H1 (cell line): ENCODE measurements at regions of chr10 and their contacts with region 1.

Region 1: DNA sequence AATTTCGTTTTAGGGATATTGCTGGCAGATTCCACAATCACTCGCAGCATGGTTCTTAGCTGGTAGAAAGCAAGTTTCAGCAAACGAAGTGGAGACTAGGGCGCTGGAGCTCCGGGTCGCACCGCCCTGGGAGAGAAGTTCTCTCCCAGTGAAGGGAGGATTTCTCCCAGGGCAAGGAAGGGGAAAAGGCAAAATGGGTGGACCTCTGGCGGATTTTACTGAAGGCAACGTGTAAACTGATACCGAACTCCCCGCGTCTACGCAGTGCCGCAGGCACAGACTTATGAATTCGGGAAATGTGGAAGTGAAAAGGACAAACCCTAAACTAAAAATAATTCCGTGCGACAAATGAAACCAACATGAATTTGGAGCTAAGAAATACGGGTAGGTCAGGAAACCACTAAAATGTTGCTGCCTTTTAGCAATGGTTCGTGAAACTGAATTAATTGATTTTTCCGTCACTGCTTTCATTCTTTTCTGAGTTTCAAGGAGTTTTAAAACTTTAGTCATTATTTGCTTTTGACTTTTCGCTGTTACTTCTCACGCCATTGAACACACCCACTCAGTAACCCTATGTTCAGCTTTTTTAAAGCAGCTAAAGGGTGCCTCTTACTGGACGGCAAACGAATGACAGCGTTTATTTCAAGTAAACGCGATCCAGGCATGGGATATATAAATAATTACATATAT is at the start of gene MYOF:
- DNase-seq: peak in 1 of 2 experiments; percentile 59
- H3K4me3 ChIP-seq: peak within 1 kb of the TSS; percentile 66 to 82 (median 73); a peak in 7 of 8 replicates
- H3K27ac ChIP-seq: no peak within 1 kb of the TSS
- H3K4me1 ChIP-seq: peaks cover 0 to 2% (median 0%) of the 10 kb centered on the region in 4 experiments; a peak in 1 of 7 replicates
- H3K27me3 ChIP-seq: peaks cover 0 to 5% (median 0%) of the 10 kb centered on the region in 4 experiments; a peak in 4 of 7 replicates
- CTCF ChIP-seq: peak in 2 of 3 experiments; percentile 52 to 71; a peak in 3 of 4 replicates
- EP300 ChIP-seq: no peak
- POLR2A ChIP-seq: no peak
- RAD21 ChIP-seq: peak; percentile 90
- total RNA-seq, gene MYOF: 2.3 and 3.2 TPM in 2 replicates

Region 2: DNA sequence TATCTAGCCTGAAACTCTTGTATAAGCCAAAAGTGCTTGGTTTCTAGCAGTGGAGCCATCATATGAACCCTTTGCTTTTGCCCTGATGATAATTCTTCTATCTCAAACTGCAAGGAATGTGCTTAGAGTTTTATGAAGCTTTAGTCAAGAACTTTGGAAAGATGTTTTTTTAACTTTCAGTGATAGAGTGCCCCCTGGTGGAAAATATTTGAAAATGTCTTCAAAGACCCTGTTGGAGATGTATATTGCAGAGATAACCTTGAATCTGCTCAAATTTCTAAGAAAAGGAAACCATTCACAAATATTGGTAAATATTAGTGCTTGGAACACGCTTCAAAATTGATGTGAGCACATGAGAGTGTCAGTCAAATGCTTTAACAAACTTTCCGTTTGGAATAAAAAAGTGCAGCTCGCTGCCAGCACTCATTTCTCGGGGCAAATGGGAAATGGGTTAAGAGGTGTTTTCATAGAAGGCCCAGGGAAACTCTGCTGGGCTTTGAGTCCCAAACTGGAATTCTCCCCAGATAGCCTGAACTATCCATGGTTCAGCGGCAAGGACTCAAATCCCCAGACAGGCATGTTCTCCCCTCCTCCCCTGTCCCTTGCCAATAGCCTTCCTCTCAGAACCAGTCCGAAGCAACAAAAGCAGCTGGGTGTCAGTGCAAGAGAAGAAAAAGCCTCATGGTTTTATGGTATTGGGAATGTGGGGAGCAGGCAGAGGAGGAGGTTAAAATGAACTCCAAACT is 129.5 kb before region 1 on chr10:
- CTCF ChIA-PET with region 1: interaction called, 41 read pairs
- POLR2A ChIA-PET with region 1: no interaction called
- DNase-seq: no peak
- H3K4me3 ChIP-seq: no peak overlapping the region
- H3K27ac ChIP-seq: no peak overlapping the region
- H3K4me1 ChIP-seq: peaks cover 0 to 5% (median 2%) of the 10 kb centered on the region in 4 experiments; a peak in 3 of 7 replicates
- H3K27me3 ChIP-seq: peaks cover 0 to 3% (median 0%) of the 10 kb centered on the region in 4 experiments; a peak in 1 of 7 replicates
- CTCF ChIP-seq: peak in 2 of 3 experiments; percentile 40 to 44; a peak in 2 of 4 replicates
- EP300 ChIP-seq: no peak
- POLR2A ChIP-seq: no peak
- RAD21 ChIP-seq: peak; percentile 66 to 68

Region 3: GRCh38 chr10:93386631-93387369 is 95.5 kb before region 1 on chr10:
- CTCF ChIA-PET with region 1: interaction called, 513 read pairs
- POLR2A ChIA-PET with region 1: no interaction called
- DNase-seq: no peak
- H3K4me3 ChIP-seq: no peak overlapping the region
- H3K27ac ChIP-seq: no peak overlapping the region
- H3K4me1 ChIP-seq: no peaks in the 10 kb centered on the region; a peak in 1 of 7 replicates
- H3K27me3 ChIP-seq: no peaks in the 10 kb centered on the region
- CTCF ChIP-seq: peak in 1 of 3 experiments; percentile 4; a peak in 1 of 4 replicates
- EP300 ChIP-seq: no peak
- POLR2A ChIP-seq: no peak
- RAD21 ChIP-seq: no peak; a peak in 1 of 4 replicates

Region 4: DNA sequence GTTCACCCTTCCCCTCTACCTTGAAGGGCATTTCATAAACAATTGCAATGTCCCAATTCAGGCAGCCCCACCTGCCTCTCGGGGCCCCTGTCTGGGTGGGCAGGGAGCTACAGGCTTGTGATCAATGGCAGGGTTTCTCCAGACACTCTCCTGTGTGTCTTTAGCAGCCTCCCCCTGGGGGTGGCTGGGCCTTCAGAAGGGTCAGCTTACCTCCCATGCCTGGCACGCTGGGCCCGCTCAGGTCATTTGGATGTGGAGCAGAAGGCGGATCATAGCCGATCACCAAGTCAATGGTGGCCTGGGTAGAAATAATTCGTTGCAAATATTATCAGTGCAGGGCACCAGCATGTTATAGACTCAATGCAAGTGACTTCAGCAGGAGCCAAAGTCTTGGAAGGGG is 56.4 kb before region 1 on chr10:
- CTCF ChIA-PET with region 1: interaction called, 12 read pairs
- POLR2A ChIA-PET with region 1: no interaction called
- DNase-seq: no peak
- H3K4me3 ChIP-seq: no peak overlapping the region
- H3K27ac ChIP-seq: no peak overlapping the region
- H3K4me1 ChIP-seq: peaks cover 0 to 11% (median 6%) of the 10 kb centered on the region in 4 experiments; a peak in 5 of 7 replicates
- H3K27me3 ChIP-seq: no peaks in the 10 kb centered on the region
- CTCF ChIP-seq: no peak
- EP300 ChIP-seq: no peak
- POLR2A ChIP-seq: no peak
- RAD21 ChIP-seq: no peak

Region 5: DNA sequence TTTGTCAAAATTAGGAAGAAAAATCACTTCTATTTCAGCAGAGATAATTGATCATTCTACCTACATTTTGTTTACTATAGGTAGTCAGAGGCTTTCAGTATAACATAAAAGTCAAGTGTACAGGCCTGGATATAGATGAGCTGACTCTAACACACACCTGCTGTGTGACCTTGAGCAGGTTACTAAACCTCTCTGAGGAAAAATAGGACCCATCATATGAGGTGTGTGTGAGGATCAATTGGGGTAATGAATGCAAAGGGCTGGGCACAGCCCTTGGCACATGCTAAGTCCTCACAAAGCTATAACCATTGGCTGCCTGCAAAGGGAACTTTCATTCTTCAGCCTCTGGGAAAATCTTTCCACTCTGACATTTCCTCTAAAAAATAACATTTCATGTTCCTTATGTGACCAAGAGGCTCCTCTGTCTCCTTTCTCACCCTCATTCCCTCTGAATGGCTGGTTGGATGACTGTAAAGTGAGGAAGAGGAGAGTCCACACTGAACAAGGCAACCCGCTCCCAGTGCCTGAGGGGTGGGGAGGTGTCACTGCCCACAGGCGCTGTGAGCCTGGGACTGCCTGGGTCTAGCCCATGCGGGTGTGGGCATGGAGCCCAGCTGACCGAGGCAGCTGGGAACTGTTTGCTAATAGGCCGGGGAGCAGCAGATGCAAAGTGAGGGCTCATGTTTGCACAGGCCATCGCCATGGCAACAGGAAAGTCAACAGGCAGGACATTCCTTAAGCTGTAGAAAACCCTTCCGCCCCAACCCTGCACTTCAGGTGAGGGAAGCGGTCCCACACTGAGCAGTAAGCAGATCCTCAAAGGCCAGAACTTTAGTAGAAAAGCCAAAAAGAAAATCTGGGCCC is 37.0 kb before region 1 on chr10:
- CTCF ChIA-PET with region 1: interaction called, 29 read pairs
- POLR2A ChIA-PET with region 1: no interaction called
- DNase-seq: peak; percentile 84 to 88
- H3K4me3 ChIP-seq: peak overlapping the region in 2 of 4 experiments; percentile 7 to 29; a peak in 2 of 8 replicates
- H3K27ac ChIP-seq: peak overlapping the region; percentile 83
- H3K4me1 ChIP-seq: peaks cover 8 to 22% (median 10%) of the 10 kb centered on the region in 4 experiments; a peak in 6 of 7 replicates
- H3K27me3 ChIP-seq: no peaks in the 10 kb centered on the region
- CTCF ChIP-seq: no peak
- EP300 ChIP-seq: peak; percentile 19 to 94; a peak in 2 of 3 replicates
- POLR2A ChIP-seq: peak; percentile 55 to 78
- RAD21 ChIP-seq: peak in 1 of 2 experiments; percentile 21; a peak in 1 of 4 replicates

Region 6: GRCh38 chr10:93471110-93471651 is 11.1 kb before region 1 on chr10:
- CTCF ChIA-PET with region 1: interaction called, 20 read pairs
- POLR2A ChIA-PET with region 1: no interaction called
- DNase-seq: no peak
- H3K4me3 ChIP-seq: no peak overlapping the region
- H3K27ac ChIP-seq: no peak overlapping the region
- H3K4me1 ChIP-seq: peaks cover 0 to 3% (median 1%) of the 10 kb centered on the region in 4 experiments; a peak in 3 of 7 replicates
- H3K27me3 ChIP-seq: no peaks in the 10 kb centered on the region
- CTCF ChIP-seq: no peak
- EP300 ChIP-seq: no peak
- POLR2A ChIP-seq: no peak
- RAD21 ChIP-seq: no peak

Region 7: GRCh38 chr10:93503075-93503474 is 20.8 kb after region 1 on chr10:
- CTCF ChIA-PET with region 1: interaction called, 201 read pairs
- POLR2A ChIA-PET with region 1: no interaction called
- DNase-seq: no peak
- H3K4me3 ChIP-seq: no peak overlapping the region
- H3K27ac ChIP-seq: no peak overlapping the region
- H3K4me1 ChIP-seq: no peaks in the 10 kb centered on the region
- H3K27me3 ChIP-seq: no peaks in the 10 kb centered on the region
- CTCF ChIP-seq: no peak
- EP300 ChIP-seq: no peak
- POLR2A ChIP-seq: no peak
- RAD21 ChIP-seq: no peak

Region 8: GRCh38 chr10:93702211-93703001 is 220.1 kb after region 1 on chr10 and contains the start of gene FRA10AC1:
- CTCF ChIA-PET with region 1: no interaction called
- POLR2A ChIA-PET with region 1: no interaction called
- DNase-seq: peak; percentile 65 to 97
- H3K4me3 ChIP-seq: peak within 1 kb of the TSS; percentile 76 to 85 (median 77)
- H3K27ac ChIP-seq: 0 out of 2 replicates have a peak within 1 kb of the TSS, but pooled peaks have one; percentile 24
- H3K4me1 ChIP-seq: peaks cover 0 to 3% (median 1%) of the 10 kb centered on the region in 4 experiments; a peak in 1 of 7 replicates
- H3K27me3 ChIP-seq: no peaks in the 10 kb centered on the region
- CTCF ChIP-seq: peak; percentile 45 to 62 (median 51); a peak in 3 of 4 replicates
- EP300 ChIP-seq: peak in 1 of 2 experiments; percentile 94; a peak in 2 of 3 replicates
- POLR2A ChIP-seq: peak; percentile 81 to 88
- RAD21 ChIP-seq: peak; percentile 46 to 59
- total RNA-seq, gene FRA10AC1: 11.9 and 13.5 TPM in 2 replicates